ENCODE measurements at regions of chr2 and their contacts with region 1.

Region 1: GRCh38 chr2:186641807-186642321 is 52.0 kb upstream of the FAM171B start:
- DNase-seq: peak; percentile 49
- ATAC-seq: peak; percentile 71
- H3K4me3 Mint-ChIP-seq: no peak overlapping the region
- H3K27ac Mint-ChIP-seq: no peak overlapping the region
- H3K4me1 Mint-ChIP-seq: peaks cover 30% of the 10 kb centered on the region
- H3K27me3 Mint-ChIP-seq: no peaks in the 10 kb centered on the region

Region 2: GRCh38 chr2:186269536-186269935 is 372.3 kb before region 1 on chr2:
- CTCF ChIA-PET with region 1: no interaction called
- POLR2A ChIA-PET with region 1: no interaction called
- intact Hi-C with region 1: loop called in 1 of 2 experiments (anchors 10 kb)
- DNase-seq: no peak
- ATAC-seq: no peak
- H3K4me3 Mint-ChIP-seq: no peak overlapping the region
- H3K27ac Mint-ChIP-seq: no peak overlapping the region
- H3K4me1 Mint-ChIP-seq: no peaks in the 10 kb centered on the region
- H3K27me3 Mint-ChIP-seq: no peaks in the 10 kb centered on the region

Region 3: GRCh38 chr2:186485871-186486650 is 155.8 kb before region 1 on chr2 and contains the start of gene ZC3H15:
- CTCF ChIA-PET with region 1: interaction called, 4 read pairs
- POLR2A ChIA-PET with region 1: interaction called, 8 read pairs
- intact Hi-C with region 1: loop called (anchors 1 kb)
- DNase-seq: peak; percentile 98
- ATAC-seq: peak; percentile 93
- H3K4me3 Mint-ChIP-seq: peak within 1 kb of the TSS; percentile 99
- H3K27ac Mint-ChIP-seq: peak within 1 kb of the TSS; percentile 99
- H3K4me1 Mint-ChIP-seq: peaks cover 58% of the 10 kb centered on the region
- H3K27me3 Mint-ChIP-seq: no peaks in the 10 kb centered on the region
- total RNA-seq, gene ZC3H15: 100 to 115 TPM

Measured in activated CD4-positive, alpha-beta T cell treated with anti-CD3 and anti-CD28 coated beads for 36 hours (primary cell).